ENCODE measurements at regions of chr4 and their contacts with region 1.

Region 1: DNA sequence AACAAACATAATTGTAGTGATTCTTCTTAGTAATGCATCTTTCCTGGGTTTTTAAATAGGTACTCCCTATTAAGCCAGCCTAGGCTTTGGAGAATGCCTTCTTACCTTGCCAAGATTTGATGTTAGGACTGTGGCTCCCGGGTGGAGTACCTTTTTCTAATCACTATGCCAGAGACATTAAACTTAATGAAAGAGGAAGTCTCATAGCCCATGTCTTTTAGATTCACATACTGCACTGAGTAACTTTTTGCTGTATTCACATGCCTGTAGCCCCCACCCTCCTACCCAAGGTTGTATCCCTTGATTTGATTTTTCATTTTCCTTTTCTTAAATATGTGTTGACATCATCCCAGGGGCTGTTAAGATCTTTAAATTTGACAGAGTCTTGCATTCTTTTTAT is 104.2 kb upstream of the TLR2 start:
- DNase-seq: no peak
- ATAC-seq: no peak
- H3K4me3 ChIP-seq: no peak overlapping the region
- H3K27ac ChIP-seq: no peak overlapping the region
- H3K4me1 ChIP-seq: no peaks in the 10 kb centered on the region
- H3K27me3 ChIP-seq: no peaks in the 10 kb centered on the region

Region 2: DNA sequence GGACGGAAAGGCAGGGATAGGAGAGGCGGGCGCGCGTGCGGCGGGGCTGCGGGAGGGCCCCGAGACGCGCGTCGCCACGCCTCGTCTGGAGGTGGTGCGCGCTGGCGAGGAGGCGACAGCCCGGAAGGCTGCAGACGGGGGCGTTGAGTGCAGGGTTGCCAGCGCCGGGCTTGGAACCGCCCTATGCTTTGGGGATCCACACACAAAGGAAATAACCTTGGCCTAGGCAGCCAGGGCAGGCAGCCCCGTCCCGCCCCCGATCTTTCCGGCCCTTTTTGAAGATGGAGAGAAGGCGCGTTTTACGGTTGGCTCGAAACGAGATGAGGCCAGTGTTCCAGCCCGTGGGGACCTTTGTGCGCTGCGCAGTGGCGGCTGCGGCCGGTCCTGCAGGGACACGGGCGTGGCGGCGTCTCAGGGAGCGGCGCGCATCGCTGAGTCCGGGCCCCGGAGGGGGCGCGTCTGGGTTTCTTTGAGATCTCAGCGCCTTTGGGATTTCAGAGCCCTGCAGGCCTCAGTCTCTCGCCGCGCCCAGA is 426.5 kb before region 1 on chr4:
- intact Hi-C with region 1: loop called in 1 of 4 experiments (anchors 5 kb)
- DNase-seq: peak; percentile 45 to 77 (median 75)
- ATAC-seq: peak; percentile 89 to 90
- H3K4me3 ChIP-seq: peak overlapping the region; percentile 54
- H3K27ac ChIP-seq: no peak overlapping the region
- H3K4me1 ChIP-seq: peaks cover 3% of the 10 kb centered on the region
- H3K27me3 ChIP-seq: peaks cover 3% of the 10 kb centered on the region

Region 3: GRCh38 chr4:153409412-153409811 is 170.5 kb before region 1 on chr4:
- intact Hi-C with region 1: no loop called
- DNase-seq: no peak
- ATAC-seq: no peak
- H3K4me3 ChIP-seq: no peak overlapping the region
- H3K27ac ChIP-seq: no peak overlapping the region
- H3K4me1 ChIP-seq: no peaks in the 10 kb centered on the region
- H3K27me3 ChIP-seq: no peaks in the 10 kb centered on the region

Measured in right cardiac atrium (tissue), 5 donors.